MCF 10A (cell line): ENCODE measurements at regions of chr18 and their contacts with region 1.

Region 1: GRCh38 chr18:8982416-8983184 is 119.9 kb upstream of the NDUFV2 start:
- DNase-seq: peak; percentile 69
- H3K4me3 Mint-ChIP-seq: no peak overlapping the region
- H3K27ac Mint-ChIP-seq: no peak overlapping the region
- H3K4me1 Mint-ChIP-seq: peaks cover 18% of the 10 kb centered on the region
- H3K27me3 Mint-ChIP-seq: no peaks in the 10 kb centered on the region
- CTCF ChIP-seq: peak; percentile 45

Region 2: GRCh38 chr18:8654503-8655451 is 327.8 kb before region 1 on chr18:
- CTCF ChIA-PET with region 1: interaction called, 94 read pairs
- POLR2A ChIA-PET with region 1: interaction called, 17 read pairs
- intact Hi-C with region 1: loop called (anchors 1 kb)
- DNase-seq: peak; percentile 40
- H3K4me3 Mint-ChIP-seq: no peak overlapping the region
- H3K27ac Mint-ChIP-seq: no peak overlapping the region
- H3K4me1 Mint-ChIP-seq: peaks cover 10% of the 10 kb centered on the region
- H3K27me3 Mint-ChIP-seq: peaks cover 14% of the 10 kb centered on the region
- CTCF ChIP-seq: peak; percentile 71

Region 3: DNA sequence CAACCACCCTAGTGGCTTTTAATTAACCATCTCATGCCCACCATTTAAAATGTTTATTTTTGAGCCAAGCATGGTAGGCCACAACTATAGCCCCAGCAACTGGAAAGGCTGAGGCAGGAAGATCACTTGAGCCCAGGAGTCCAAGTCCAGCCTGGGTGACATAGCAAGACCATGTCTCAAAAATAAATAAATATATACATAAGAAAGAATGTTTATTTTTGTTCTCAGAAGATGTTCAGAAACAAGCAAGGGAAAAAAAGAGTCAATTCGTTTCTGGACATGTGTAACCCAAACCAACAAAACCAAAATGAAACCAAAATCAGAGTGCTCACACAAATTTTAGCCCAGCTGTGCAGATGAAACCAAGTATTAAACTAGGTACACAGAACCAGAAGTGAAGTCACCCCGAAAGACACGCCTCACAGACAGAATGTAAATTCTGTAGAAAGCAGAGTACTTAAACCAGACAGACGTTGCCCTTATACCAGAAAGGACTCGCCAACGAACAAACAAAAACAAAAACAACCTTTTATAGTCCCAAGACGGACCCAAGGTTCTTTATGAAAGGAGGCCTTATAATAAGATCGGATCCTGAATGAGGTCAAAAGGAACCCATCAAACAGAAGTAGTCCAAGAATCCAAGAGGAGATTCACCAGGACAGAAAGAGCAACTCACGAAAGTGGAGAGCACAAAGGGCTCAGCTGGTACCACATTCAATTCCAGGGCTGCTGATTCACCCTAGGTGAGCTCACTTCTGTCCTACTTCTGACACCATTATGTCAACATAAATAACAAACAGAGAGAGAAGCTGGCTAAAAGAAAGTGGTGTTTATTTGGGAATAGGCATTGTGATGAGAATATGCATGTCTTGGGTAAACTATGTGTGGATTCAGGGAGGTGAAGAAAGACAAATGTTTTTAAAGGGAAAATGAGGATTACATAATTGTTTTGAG is 309.1 kb before region 1 on chr18:
- CTCF ChIA-PET with region 1: interaction called, 11 read pairs
- POLR2A ChIA-PET with region 1: interaction called, 3 read pairs
- intact Hi-C with region 1: no loop called
- DNase-seq: no peak
- H3K4me3 Mint-ChIP-seq: no peak overlapping the region
- H3K27ac Mint-ChIP-seq: no peak overlapping the region
- H3K4me1 Mint-ChIP-seq: no peaks in the 10 kb centered on the region
- H3K27me3 Mint-ChIP-seq: no peaks in the 10 kb centered on the region
- CTCF ChIP-seq: no peak

Region 4: DNA sequence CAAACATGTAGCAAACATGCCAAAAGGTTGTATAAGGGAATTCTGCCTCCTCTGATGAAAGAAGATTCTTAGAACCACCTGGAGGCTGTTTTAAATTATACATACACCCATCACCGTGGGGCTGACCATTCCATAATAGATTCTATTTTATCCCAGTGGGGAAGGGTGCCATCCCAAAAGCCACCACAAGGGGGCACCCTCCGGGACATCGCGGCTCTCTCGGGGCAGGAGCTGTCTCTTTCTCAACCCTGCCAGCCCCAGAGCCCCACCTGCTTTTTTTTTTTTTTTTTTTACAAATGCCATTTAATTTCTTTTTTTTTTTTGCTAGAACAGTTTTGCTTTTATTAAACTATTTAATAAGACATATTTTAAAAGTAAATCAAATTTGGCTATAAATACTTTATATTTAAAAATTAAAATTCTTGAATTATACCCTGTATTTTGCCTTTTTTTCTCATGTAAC is 285.8 kb before region 1 on chr18:
- CTCF ChIA-PET with region 1: interaction called, 56 read pairs
- POLR2A ChIA-PET with region 1: interaction called, 5 read pairs
- intact Hi-C with region 1: loop called (anchors 1 kb)
- DNase-seq: peak; percentile 63
- H3K4me3 Mint-ChIP-seq: no peak overlapping the region
- H3K27ac Mint-ChIP-seq: no peak overlapping the region
- H3K4me1 Mint-ChIP-seq: peaks cover 4% of the 10 kb centered on the region
- H3K27me3 Mint-ChIP-seq: no peaks in the 10 kb centered on the region
- CTCF ChIP-seq: peak; percentile 61

Region 5: DNA sequence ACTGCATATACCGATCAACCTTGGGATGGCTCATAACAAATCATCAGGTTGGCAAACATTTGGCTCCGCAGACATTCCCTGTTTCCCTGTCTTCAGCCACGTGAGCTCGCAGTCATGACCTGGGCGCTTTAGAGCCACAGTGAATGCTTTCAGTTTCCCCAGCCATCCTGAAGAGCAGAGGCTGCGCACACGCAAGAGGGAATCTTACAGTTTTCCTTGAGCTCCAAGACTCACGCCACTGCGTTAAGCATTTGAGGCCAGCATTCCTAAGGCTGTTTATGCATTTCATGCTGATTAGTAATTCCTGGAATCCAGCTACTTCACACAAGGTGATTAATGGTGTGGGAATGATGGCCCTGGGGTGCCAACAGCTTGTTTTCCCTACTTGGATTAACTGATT is 182.2 kb before region 1 on chr18:
- CTCF ChIA-PET with region 1: interaction called, 21 read pairs
- POLR2A ChIA-PET with region 1: interaction called, 7 read pairs
- intact Hi-C with region 1: no loop called
- DNase-seq: peak; percentile 92
- H3K4me3 Mint-ChIP-seq: peak overlapping the region; percentile 53
- H3K27ac Mint-ChIP-seq: peak overlapping the region; percentile 83
- H3K4me1 Mint-ChIP-seq: peaks cover 27% of the 10 kb centered on the region
- H3K27me3 Mint-ChIP-seq: no peaks in the 10 kb centered on the region
- CTCF ChIP-seq: no peak

Region 6: DNA sequence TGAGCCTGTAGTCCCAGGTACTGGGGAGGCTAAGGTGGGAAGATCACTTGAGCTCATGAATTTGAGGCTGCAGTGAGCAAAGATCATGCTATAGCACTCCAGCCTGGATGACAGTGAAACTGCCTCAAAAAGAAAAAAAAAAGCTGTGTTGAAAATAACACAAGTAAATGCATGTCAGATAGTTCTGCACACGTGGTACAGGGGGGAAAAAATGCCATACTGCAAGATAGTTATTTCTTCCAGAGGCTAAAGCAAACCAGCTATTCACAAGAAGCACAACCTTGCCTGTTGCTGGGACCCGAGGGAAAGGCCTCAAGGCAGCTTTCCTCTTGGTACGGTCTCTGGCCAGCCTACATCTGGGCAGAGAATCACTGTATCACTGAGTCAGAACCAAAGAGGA is 59.9 kb before region 1 on chr18:
- CTCF ChIA-PET with region 1: interaction called, 5 read pairs
- POLR2A ChIA-PET with region 1: no interaction called
- intact Hi-C with region 1: loop called (anchors 2 kb)
- DNase-seq: no peak
- H3K4me3 Mint-ChIP-seq: no peak overlapping the region
- H3K27ac Mint-ChIP-seq: no peak overlapping the region
- H3K4me1 Mint-ChIP-seq: no peaks in the 10 kb centered on the region
- H3K27me3 Mint-ChIP-seq: no peaks in the 10 kb centered on the region
- CTCF ChIP-seq: no peak

Region 7: GRCh38 chr18:8969639-8970390 is 12.8 kb before region 1 on chr18:
- CTCF ChIA-PET with region 1: interaction called, 27 read pairs
- POLR2A ChIA-PET with region 1: interaction called, 6 read pairs
- intact Hi-C with region 1: no loop called
- DNase-seq: no peak
- H3K4me3 Mint-ChIP-seq: no peak overlapping the region
- H3K27ac Mint-ChIP-seq: no peak overlapping the region
- H3K4me1 Mint-ChIP-seq: no peaks in the 10 kb centered on the region
- H3K27me3 Mint-ChIP-seq: no peaks in the 10 kb centered on the region
- CTCF ChIP-seq: no peak